ENCODE measurements at regions of chr10 and their contacts with region 1.

Region 1: GRCh38 chr10:102627736-102628293 is 16.5 kb upstream of the TRIM8 start:
- DNase-seq: no peak
- ATAC-seq: no peak
- H3K4me3 Mint-ChIP-seq: no peak overlapping the region
- H3K27ac Mint-ChIP-seq: no peak overlapping the region
- H3K4me1 Mint-ChIP-seq: peaks cover 22% of the 10 kb centered on the region
- H3K27me3 Mint-ChIP-seq: no peaks in the 10 kb centered on the region

Region 2: GRCh38 chr10:102211615-102212299 is 416.1 kb before region 1 on chr10:
- CTCF ChIA-PET with region 1: no interaction called
- DNase-seq: no peak
- ATAC-seq: no peak
- H3K4me3 Mint-ChIP-seq: no peak overlapping the region
- H3K27ac Mint-ChIP-seq: no peak overlapping the region
- H3K4me1 Mint-ChIP-seq: peaks cover 7% of the 10 kb centered on the region
- H3K27me3 Mint-ChIP-seq: peaks cover 13% of the 10 kb centered on the region

Region 3: DNA sequence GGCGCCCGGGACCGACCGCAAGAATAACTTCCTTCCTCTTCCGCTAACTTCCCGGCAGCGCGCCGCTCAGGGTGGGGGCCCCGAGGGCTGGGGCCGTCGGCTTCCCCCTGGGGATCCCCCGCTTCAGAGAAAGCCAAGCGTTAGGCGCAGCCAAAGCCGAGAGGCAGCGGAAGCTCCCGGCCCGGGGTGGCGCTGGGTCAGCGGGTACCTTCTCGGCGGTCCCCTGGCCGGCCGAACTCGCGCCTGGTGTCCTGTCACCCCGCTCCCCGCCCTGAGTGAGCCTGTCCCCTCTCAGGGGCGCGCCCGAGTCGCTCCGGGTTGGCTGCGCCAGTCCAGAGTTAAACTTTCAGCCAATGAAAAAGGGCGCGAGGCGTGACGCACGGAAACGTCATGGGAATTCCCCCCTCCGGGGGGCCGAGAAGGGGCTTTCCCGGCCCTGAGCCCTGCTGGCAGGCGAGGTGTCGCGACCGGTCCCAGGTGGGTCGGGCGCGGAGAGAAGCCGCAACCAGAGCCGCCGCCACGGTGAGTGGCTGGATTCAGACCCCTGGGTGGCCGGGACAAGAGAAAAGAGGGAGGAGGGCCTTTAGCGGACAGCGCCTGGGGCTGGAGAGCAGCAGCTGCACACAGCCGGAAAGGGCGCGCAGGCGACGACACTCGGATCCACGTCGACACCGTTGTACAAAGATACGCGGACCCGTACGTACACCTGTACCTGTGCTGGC is 233.6 kb before region 1 on chr10:
- CTCF ChIA-PET with region 1: no interaction called
- DNase-seq: peak; percentile 99
- ATAC-seq: peak; percentile 88
- H3K4me3 Mint-ChIP-seq: peak overlapping the region; percentile 84
- H3K27ac Mint-ChIP-seq: peak overlapping the region; percentile 90
- H3K4me1 Mint-ChIP-seq: peaks cover 38% of the 10 kb centered on the region
- H3K27me3 Mint-ChIP-seq: no peaks in the 10 kb centered on the region

Region 4: DNA sequence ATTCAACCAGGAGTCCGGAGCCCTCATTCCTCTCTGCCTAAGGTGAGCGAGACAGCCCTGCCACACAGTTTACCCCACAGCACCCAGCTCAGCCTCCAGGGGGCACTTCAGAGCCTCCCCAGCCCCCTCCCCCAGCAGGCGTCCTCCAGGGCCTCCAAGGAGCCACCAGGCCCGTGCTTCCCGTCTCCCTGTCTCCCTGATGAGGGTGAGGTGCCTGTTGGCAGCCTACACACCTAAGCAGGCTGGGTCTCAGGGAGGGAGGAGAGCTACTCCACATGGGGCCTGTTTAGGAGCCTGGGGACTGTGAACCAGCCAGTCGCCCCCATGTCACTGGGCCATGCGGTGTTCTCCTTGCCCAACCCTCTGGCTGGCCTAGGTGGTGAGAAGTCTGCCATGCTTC is 12.5 kb before region 1 on chr10:
- CTCF ChIA-PET with region 1: interaction called, 12 read pairs
- DNase-seq: no peak
- ATAC-seq: no peak
- H3K4me3 Mint-ChIP-seq: no peak overlapping the region
- H3K27ac Mint-ChIP-seq: no peak overlapping the region
- H3K4me1 Mint-ChIP-seq: peaks cover 17% of the 10 kb centered on the region
- H3K27me3 Mint-ChIP-seq: no peaks in the 10 kb centered on the region

Measured in activated CD8-positive, alpha-beta memory T cell treated with anti-CD3 and anti-CD28 coated beads, Interleukin-2, amount 10 ng/mL, durations not matched to agents 7 days and 5 days (primary cell).